Cardiac septum (tissue), 1 donor: ENCODE measurements at regions of chr2 and their contacts with region 1.

Region 1: DNA sequence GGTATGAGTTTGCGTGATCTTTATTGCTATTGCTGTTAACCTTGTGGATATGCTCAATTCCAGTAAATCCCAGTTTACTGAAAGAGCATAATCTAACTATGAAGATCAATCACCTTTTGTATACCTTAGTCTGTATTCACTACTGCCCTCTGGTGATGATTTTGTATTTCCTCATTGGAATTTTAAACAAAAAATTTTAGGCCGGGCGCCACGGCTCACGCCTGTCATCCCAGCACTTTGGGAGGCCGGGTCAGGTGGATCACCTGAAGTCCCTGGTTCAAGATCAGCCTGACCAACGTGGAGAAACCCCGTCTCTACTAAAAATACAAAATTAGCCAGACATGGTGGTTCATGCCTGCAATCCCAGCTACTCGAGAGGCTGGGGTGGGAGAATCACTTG is 5.1 kb downstream of the COMMD1 start:
- DNase-seq: no peak

Region 2: DNA sequence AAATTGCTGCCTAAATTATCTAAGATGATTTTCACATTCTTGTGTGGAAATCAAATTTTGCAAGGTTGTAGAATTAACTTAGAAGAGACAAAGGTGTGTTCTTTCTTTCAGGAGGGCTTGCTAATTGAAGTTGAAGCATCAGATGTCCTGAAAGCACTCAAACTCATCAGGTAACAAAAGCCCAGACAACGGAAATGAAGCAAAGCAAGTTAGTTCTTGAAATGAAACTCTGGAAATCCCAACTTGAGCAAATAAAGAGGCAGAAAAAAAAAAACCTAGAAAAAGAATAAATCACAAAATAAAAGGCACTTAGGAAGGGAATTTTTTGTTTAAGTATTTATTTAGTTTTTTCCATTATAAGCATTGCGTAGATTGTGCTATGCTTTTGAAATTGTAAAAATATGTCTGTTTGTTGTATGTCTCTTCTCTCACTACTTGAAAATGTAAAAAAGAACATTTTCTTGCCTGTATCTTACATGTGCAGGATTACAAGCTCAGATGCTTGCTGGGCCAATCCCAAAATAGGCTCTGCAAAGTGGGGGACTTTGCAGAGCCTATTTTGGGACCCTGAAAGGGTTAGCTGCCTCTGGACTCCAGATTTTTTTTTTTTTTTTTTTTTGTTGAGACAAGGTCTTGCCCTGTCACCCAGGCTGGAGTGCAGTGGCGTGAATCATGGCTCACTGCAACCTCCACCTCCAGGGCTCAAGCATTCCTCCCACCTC is 103.4 kb before region 1 on chr2:
- intact Hi-C with region 1: no loop called
- DNase-seq: no peak

Region 3: DNA sequence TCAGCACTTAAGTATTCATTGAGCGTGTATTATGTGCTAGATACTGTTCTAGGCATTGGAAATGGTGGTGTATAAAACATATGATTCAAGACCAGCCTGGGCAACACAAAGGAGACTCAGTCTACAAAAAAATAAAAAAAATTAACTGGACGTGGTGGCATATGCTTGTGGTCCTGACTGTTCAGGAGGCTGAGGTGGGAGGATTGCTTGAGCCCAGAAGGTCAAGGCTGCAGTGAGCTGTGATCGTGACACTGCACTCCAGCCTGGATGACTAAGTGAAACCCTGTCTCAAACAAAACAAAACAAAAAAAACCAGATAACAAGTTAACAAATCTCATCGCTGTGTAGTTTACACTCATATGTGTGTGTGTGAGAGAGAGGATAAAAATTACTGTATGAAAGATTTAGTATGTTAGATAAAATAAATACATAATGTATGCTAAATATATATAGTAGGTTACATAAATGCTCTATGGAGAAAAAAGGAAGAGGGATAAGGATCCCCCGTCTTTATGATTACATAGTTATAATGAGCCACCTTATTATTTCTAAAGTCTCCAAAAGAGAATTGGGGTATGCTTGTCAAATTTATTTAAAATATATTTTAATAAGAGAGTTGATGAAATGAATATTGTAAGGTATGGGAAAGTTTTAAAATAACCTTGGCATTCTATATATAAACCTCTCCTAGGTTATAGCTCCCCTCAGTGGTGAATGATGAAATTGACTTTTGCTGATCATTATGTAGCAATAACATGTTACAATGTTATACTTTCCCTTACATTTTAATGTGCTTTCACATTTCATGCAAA is 864.2 kb after region 1 on chr2:
- intact Hi-C with region 1: loop called (anchors 10 kb)
- DNase-seq: no peak